Calu3 (cell line): ENCODE measurements at regions of chr14 and their contacts with region 1.

Region 1: DNA sequence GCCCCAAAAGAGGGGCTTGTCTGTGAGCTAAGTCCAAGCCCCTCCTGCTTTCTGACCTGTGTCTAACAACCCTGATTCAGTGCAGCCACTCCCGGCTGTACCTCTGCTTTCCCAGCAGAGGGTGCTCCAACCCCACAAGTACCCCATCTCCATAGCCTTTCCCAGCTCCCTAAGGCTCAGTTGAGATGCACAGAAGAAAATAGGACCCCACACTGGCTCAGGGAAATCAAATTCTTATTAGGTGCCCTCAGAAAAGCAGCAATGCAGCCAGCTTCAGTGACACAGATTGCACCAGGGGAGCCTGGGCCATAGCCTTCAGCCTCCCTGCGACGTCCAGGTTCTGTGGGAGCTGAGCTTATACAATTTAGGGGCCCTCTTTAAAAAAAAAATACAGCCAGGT is 49.9 kb downstream of the LRRC74A start:
- DNase-seq: peak; percentile 71
- H3K4me3 Mint-ChIP-seq: no peak overlapping the region
- H3K27ac Mint-ChIP-seq: no peak overlapping the region
- H3K4me1 Mint-ChIP-seq: no peaks in the 10 kb centered on the region
- H3K27me3 Mint-ChIP-seq: peaks cover 24% of the 10 kb centered on the region
- CTCF ChIP-seq: peak; percentile 73

Region 2: GRCh38 chr14:76446921-76447320 is 429.2 kb before region 1 on chr14:
- CTCF ChIA-PET with region 1: no interaction called
- intact Hi-C with region 1: no loop called
- DNase-seq: no peak
- H3K4me3 Mint-ChIP-seq: no peak overlapping the region
- H3K27ac Mint-ChIP-seq: no peak overlapping the region
- H3K4me1 Mint-ChIP-seq: no peaks in the 10 kb centered on the region
- H3K27me3 Mint-ChIP-seq: peaks cover 51% of the 10 kb centered on the region
- CTCF ChIP-seq: no peak

Region 3: DNA sequence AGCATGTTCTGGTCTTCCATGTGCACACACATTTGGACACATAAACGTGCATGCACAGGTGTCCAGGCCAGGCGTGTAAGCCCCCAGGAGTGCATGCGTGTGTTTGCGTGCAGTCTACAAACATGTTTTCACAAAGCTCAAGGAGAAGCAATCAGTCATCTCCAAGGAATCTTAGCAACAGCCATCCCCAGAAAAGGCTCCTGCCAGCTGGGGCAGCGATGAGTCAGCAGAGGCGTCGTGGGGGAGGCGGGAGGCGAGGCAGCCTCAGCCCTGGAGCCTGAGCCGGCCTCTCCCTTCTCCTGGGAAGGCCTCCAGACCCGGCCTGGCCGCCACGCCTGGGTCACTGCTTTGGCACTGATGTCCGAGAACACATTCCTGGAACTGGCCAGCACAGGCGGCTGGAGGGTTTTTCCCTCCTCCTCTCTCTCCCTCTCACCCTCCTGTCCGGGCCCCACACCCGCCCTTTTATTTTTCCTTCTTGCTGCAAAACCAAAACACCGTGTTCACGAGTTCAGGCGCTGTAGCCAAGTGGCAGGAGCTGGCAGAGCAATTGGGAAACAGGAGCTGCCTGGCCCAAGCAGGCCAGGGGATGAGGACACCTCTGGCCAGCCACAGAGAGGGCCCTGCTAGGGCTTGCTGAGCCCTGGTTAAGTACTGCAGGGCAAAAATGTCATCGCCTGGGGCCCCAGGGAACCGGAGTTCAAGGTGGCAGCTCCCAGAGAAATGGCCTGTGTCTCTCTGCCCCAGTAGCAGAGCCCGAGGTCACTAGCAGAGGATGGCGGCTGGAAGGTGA is 42.9 kb after region 1 on chr14:
- CTCF ChIA-PET with region 1: interaction called, 12 read pairs
- intact Hi-C with region 1: no loop called
- DNase-seq: peak; percentile 92
- H3K4me3 Mint-ChIP-seq: peak overlapping the region; percentile 55
- H3K27ac Mint-ChIP-seq: peak overlapping the region; percentile 84
- H3K4me1 Mint-ChIP-seq: peaks cover 63% of the 10 kb centered on the region
- H3K27me3 Mint-ChIP-seq: no peaks in the 10 kb centered on the region
- CTCF ChIP-seq: no peak

Region 4: GRCh38 chr14:76947078-76947837 is 71.2 kb after region 1 on chr14:
- CTCF ChIA-PET with region 1: no interaction called
- intact Hi-C with region 1: loop called (anchors 2 kb)
- DNase-seq: peak; percentile 93
- H3K4me3 Mint-ChIP-seq: peak overlapping the region; percentile 39
- H3K27ac Mint-ChIP-seq: peak overlapping the region; percentile 95
- H3K4me1 Mint-ChIP-seq: peaks cover 55% of the 10 kb centered on the region
- H3K27me3 Mint-ChIP-seq: no peaks in the 10 kb centered on the region
- CTCF ChIP-seq: peak; percentile 37

Region 5: DNA sequence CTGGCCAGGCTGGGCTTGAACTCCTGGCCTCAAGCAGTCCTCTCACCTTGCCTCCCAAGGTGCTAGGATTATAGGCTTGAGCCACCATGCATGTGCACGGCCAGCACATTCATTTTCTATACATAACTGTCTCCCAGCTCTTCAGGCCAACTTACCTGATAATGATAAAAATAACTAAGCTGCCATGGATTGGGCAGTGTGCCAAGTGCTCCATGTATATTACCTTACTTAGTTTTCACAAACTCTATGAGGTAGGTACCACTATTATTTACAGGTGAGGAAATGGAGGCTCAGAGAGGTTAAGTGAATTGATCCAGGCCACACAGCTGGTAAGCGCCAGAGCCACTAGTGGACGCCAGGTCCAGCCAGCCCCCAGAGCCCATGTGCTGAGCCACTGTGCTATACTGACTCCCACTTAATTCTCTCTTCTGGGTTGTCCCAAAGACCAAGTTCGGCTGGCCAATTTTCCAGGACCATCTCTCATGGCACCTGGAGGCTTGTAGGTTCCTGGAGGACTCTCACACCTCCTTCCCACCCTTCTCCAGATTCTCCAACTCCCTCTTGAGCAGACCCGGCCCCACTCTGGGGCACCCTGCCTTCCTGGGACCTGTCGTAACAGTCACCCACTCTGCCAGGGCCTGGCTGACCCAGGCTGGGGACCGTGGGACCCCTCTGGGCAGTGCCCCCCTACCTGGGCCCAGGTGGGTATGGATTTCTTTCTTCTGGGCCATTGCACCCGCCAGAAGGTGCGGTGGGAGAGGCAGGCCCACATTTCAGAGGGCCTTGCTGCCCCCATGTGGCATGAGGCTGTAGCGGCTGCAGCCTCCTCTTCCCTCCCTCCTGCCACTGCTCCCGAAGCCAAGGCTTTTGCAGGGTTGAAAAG is 191.8 kb after region 1 on chr14:
- CTCF ChIA-PET with region 1: interaction called, 63 read pairs
- intact Hi-C with region 1: loop called (anchors 1 kb)
- DNase-seq: peak; percentile 84
- H3K4me3 Mint-ChIP-seq: no peak overlapping the region
- H3K27ac Mint-ChIP-seq: no peak overlapping the region
- H3K4me1 Mint-ChIP-seq: peaks cover 25% of the 10 kb centered on the region
- H3K27me3 Mint-ChIP-seq: no peaks in the 10 kb centered on the region
- CTCF ChIP-seq: peak; percentile 88

Region 6: DNA sequence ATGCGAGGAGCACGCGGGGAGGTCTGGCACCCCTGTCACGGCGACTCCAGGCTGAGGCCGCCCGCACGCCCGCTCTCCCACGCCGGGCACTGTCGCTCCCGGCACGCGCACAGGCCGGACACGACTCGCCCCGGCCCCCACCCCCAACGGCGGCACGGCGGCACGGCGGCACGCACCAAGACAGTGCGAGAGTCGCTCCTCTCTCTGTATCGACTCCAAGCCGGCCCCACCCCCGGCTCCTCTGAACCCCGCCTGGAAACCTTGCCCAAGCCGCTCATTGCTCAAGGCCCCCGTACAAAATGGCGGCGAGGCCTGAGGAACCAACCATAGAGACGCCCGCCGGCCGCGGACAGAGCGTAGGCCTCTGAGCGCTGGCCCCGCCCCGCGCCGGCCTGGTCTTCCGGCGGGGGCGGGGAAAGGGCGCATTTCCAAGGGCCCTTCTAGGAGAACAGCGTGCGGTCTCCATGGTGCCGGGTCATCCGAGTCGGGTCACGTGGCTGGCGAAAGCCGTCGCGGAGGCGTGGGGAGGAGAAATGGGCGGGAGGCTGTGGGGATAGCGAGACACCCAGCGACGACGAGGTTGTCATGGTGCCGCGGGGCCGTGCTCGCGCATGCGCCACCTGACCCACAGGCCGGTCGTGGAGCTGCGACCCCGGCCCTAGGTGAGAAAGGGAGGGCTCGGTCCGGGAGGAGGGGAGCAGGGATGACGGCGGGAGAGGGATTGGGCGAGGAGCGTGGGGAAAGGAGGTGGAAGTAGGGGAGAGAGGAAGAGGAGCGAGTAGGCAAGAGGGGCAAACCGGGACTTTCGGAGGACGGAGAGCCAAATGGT is 221.8 kb after region 1 on chr14 and contains the start of gene CIPC:
- CTCF ChIA-PET with region 1: interaction called, 10 read pairs
- intact Hi-C with region 1: loop called (anchors 1 kb)
- DNase-seq: peak; percentile 98
- H3K4me3 Mint-ChIP-seq: peak within 1 kb of the TSS; percentile 97
- H3K27ac Mint-ChIP-seq: peak within 1 kb of the TSS; percentile 94
- H3K4me1 Mint-ChIP-seq: peaks cover 45% of the 10 kb centered on the region
- H3K27me3 Mint-ChIP-seq: no peaks in the 10 kb centered on the region
- CTCF ChIP-seq: no peak
- total RNA-seq, gene CIPC: 16.5 and 18.9 TPM in 2 replicates

Region 7: GRCh38 chr14:77151918-77152588 is 276.0 kb after region 1 on chr14:
- CTCF ChIA-PET with region 1: interaction called, 19 read pairs
- intact Hi-C with region 1: loop called (anchors 2 kb)
- DNase-seq: no peak
- H3K4me3 Mint-ChIP-seq: no peak overlapping the region
- H3K27ac Mint-ChIP-seq: no peak overlapping the region
- H3K4me1 Mint-ChIP-seq: no peaks in the 10 kb centered on the region
- H3K27me3 Mint-ChIP-seq: peaks cover 63% of the 10 kb centered on the region
- CTCF ChIP-seq: no peak

Region 8: GRCh38 chr14:77314043-77314442 is 438.0 kb after region 1 on chr14:
- CTCF ChIA-PET with region 1: interaction called, 3 read pairs
- intact Hi-C with region 1: loop called (anchors 5 kb)
- DNase-seq: no peak
- H3K4me3 Mint-ChIP-seq: no peak overlapping the region
- H3K27ac Mint-ChIP-seq: no peak overlapping the region
- H3K4me1 Mint-ChIP-seq: peaks cover 15% of the 10 kb centered on the region
- H3K27me3 Mint-ChIP-seq: no peaks in the 10 kb centered on the region
- CTCF ChIP-seq: no peak